ENCODE measurements at regions of chr11 and their contacts with region 1.

Region 1: GRCh38 chr11:62324738-62325556 is 12.3 kb upstream of the ASRGL1 start:
- DNase-seq: peak in 1 of 2 donors; percentile 19
- H3K4me3 ChIP-seq: no peak overlapping the region
- CTCF ChIP-seq: no peak
- POLR2A ChIP-seq: no peak

Region 2: DNA sequence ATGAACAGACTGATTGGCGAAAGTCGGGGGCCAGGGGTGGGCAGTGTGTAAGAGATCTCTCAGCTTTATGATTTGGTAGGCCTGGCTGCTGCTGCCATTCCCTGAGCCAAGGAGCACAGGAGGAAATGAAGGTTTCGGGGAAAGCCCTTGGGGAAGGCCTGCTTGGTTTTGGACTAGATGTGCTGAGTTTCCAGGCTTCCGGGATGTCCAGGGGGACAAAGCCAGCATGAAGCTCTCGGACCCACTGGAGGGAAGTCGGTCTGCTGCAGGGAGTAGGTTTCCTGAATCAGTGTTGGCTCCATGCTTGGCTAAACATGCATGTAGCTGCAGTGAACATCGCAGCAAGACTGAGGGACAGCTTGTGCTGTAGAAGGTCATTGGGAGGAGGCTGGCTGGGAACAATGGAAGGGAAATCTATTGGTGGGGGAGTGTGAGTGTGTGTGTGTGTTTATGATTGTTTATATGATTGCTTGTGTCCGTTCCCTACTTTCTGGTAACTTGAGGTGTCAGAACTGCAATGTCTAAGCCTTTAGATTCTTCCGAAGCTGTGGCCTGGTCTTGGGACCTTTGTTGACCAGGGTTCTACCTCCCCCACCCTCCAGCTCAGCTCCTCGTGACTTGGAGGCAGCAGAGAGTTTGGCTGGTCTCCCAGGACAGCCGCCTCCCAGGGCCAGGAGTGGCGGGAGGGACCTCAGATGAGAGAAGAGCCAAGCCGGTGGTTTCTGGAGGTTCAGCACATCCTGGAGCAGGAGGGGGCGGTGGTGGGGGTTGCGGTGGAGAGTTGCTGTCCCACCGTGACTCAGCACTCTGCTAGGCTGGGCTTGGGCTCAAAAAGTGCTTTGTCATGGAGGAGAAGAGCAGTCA is 353.5 kb before region 1 on chr11:
- intact Hi-C with region 1: no loop called
- DNase-seq: peak; percentile 98 to 99
- H3K4me3 ChIP-seq: no peak overlapping the region
- CTCF ChIP-seq: no peak
- POLR2A ChIP-seq: no peak

Region 3: DNA sequence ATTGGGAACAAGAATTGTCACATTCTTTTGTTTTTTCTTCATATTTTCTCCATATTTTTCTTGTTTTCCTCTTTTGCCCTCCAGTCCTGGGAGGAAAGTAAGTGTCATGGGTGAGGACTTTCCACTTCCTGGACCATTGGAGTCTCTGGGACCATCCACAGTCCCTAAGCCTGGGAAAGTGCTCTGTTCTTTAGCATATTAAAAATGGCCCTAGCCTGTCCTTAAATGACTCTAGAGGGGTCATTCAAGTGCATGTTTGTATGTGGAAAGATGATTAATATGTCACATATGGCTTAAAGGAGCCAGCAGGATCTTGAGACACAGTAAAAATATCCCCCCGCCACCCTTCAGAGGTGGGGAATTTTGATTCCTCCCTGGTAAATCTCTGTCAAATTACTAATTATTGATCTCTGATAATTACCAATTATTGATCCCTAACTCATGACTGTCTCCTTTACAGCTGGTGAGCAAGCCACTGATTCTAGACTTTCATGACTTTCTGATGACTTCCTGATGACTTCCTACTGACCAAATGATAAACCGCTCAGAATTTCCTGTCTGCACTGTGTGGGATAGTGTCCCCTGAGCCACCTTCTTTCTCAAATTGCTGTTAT is 154.9 kb before region 1 on chr11:
- intact Hi-C with region 1: loop called (anchors 10 kb)
- DNase-seq: no peak
- H3K4me3 ChIP-seq: no peak overlapping the region
- CTCF ChIP-seq: no peak
- POLR2A ChIP-seq: no peak